ENCODE measurements at regions of chr6 and their contacts with region 1.

Region 1: DNA sequence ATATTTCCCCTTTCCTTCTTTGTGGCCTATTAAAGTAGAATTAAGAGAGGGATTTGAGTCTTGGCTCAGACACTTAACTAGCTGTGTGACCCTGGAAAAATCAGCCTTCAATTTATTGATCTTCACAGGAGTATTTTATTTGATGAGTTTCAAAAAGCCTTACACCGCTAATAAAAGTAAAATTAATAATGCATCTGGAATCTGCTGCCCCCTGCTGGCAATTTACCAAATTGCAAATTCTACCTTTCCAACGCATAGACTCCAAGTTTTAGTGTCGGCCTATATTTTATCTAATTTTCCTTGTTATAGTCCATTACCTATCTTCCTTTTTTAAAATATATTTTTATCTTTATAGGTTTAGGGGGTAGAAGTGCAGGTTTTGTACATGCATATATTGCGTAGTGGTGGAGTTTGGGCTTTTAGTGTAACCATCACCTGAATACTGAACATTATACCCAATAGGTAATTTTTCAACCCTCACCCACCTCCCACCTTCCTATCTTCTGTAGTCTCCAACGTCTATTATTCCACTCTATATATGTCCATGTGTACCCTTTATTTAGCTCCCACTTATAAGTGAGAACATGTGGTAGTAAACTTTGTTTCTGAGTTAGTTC is 46.3 kb downstream of the GOPC start:
- DNase-seq: no peak
- ATAC-seq: peak; percentile 68
- H3K4me3 ChIP-seq: no peak overlapping the region
- H3K27ac ChIP-seq: no peak overlapping the region
- H3K4me1 ChIP-seq: no peaks in the 10 kb centered on the region
- H3K27me3 ChIP-seq: no peaks in the 10 kb centered on the region
- CTCF ChIP-seq: peak; percentile 57 to 71 (median 63)
- EP300 ChIP-seq: no peak
- POLR2A ChIP-seq: no peak
- RAD21 ChIP-seq: peak; percentile 78

Region 2: GRCh38 chr6:117078624-117079023 is 477.4 kb before region 1 on chr6:
- CTCF ChIA-PET with region 1: no interaction called
- POLR2A ChIA-PET with region 1: no interaction called
- RAD21 ChIA-PET with region 1: no interaction called
- SMC1A ChIA-PET with region 1: no interaction called
- in situ Hi-C with region 1: no loop called
- intact Hi-C with region 1: no loop called
- DNase-seq: no peak
- ATAC-seq: no peak
- H3K4me3 ChIP-seq: no peak overlapping the region
- H3K27ac ChIP-seq: no peak overlapping the region
- H3K4me1 ChIP-seq: no peaks in the 10 kb centered on the region
- H3K27me3 ChIP-seq: no peaks in the 10 kb centered on the region
- CTCF ChIP-seq: no peak
- EP300 ChIP-seq: no peak
- POLR2A ChIP-seq: no peak
- RAD21 ChIP-seq: no peak

Region 3: DNA sequence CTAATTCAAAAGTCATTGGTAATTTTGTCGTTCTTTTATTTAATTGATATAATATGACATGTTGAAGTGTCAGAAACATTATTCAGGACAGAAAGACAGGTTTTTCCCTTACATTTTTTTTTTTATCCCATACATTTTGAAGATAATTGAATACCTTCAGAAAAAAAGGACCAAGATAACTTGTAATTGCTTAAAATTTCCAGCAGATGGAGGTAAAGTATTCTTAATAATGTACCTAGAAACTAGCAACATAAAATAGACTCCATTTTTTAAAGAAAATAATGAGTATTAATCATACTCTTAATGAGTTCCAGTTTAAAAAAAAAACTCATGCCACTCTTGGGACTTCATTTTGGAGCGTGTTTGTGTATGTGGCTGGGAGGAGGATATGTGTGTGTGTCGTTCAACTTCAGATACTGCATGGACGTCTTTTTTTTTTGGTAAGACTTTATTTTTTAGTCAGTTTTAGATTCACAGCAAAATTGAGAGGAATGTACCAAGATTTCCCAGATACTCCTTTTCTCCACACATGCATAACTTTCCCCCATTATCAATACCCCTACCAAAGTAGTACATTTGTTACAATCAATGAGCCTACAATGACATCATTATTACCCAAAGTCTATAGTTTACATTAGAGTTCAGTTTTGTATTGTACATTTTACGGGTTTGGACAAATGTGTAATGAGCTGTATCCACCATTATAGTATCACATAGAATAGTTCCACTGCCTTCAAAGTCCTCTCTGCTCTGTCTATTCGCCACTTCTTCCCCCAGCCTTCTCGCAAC is 209.7 kb before region 1 on chr6:
- CTCF ChIA-PET with region 1: interaction called, 3 read pairs
- POLR2A ChIA-PET with region 1: no interaction called
- RAD21 ChIA-PET with region 1: no interaction called
- SMC1A ChIA-PET with region 1: interaction called, 3 read pairs
- in situ Hi-C with region 1: loop called (anchors 10 kb)
- intact Hi-C with region 1: loop called (anchors 5 kb)
- DNase-seq: no peak
- ATAC-seq: peak; percentile 63
- H3K4me3 ChIP-seq: no peak overlapping the region
- H3K27ac ChIP-seq: no peak overlapping the region
- H3K4me1 ChIP-seq: no peaks in the 10 kb centered on the region
- H3K27me3 ChIP-seq: no peaks in the 10 kb centered on the region; a peak in 1 of 4 replicates
- CTCF ChIP-seq: peak in 2 of 3 experiments; percentile 29 to 35; a peak in 3 of 6 replicates
- EP300 ChIP-seq: no peak
- POLR2A ChIP-seq: no peak
- RAD21 ChIP-seq: 0 out of 2 replicates have a peak, but pooled peaks have one; percentile 14

Region 4: DNA sequence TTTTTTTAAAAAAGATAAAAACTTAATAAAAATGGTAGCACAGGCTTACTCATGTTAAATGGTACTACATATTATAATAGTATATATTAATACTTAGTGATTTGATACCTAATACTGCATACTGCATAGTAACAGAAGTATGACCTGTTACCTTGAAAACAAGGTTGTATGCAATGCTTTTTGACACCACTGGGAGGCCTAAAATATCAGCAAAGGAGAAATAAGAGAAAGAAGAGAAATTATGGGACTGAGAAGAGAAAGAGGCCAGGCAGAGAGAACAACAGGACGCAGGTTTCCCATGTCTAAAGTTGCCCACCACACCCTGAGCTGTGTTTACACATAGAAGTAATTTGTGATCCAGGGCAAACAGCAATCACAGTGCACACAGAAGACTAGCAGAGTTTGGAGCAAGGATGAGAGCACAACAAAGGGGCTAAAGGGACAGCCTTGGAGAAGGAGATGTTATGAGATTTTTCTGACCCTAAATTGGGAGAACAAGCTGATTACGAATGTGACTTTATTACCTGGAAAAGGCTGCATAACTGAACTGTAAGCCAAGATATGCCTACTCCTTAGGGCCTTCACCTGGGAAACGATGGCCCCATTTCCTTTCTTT is 203.4 kb before region 1 on chr6:
- CTCF ChIA-PET with region 1: no interaction called
- POLR2A ChIA-PET with region 1: no interaction called
- RAD21 ChIA-PET with region 1: no interaction called
- SMC1A ChIA-PET with region 1: no interaction called
- in situ Hi-C with region 1: loop called (anchors 10 kb)
- intact Hi-C with region 1: loop called (anchors 5 kb)
- DNase-seq: no peak
- ATAC-seq: peak; percentile 70
- H3K4me3 ChIP-seq: no peak overlapping the region
- H3K27ac ChIP-seq: no peak overlapping the region
- H3K4me1 ChIP-seq: no peaks in the 10 kb centered on the region
- H3K27me3 ChIP-seq: no peaks in the 10 kb centered on the region
- CTCF ChIP-seq: peak; percentile 32 to 49 (median 36); a peak in 4 of 6 replicates
- EP300 ChIP-seq: no peak
- POLR2A ChIP-seq: no peak
- RAD21 ChIP-seq: peak; percentile 41; the same call in 1 of the 2 replicates

Region 5: DNA sequence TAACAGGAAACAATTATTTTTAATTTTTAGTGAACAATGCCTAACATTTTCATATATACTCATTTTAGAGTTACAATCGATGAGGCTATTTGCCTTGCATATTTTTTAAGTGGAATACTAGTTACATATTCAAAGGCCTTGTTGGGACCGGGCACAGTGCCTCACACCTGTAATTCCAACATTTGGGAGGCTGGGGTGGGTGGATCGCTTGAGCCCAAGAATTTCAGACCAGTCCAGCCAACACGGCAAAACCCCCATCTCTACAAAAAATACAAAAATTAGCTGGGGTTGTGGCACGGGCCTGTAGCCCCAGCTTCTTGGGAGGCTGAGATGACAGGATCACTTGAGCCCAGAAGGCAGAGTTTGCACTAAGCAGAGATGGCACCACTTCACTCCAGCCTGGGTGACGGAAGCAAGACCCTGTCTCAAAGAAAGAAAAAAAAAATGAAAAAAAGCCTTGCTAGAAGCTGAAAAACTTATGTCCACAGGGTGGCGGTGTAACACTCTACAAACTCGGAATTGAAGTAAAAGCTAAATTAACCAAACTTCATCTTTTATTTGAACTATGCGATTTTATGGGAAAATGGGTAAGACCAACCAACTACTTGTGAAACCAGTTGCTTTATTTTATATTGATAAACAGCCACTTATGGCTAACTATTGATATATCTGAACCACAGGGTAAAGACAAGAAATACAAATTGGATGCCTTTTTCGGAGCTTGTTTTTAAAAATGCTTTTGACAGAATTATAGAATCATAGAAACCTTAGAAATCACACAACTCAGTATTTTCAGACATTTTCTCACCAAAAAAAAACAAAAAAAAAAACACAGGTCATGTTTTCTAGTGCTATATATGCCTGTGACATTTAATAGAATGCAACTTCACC is 106.2 kb before region 1 on chr6:
- CTCF ChIA-PET with region 1: interaction called, 119 read pairs
- POLR2A ChIA-PET with region 1: no interaction called
- RAD21 ChIA-PET with region 1: interaction called, 47 read pairs
- SMC1A ChIA-PET with region 1: interaction called, 51 read pairs
- in situ Hi-C with region 1: loop called (anchors 5 kb)
- intact Hi-C with region 1: loop called (anchors 1 kb)
- DNase-seq: peak; percentile 12
- ATAC-seq: peak; percentile 62
- H3K4me3 ChIP-seq: no peak overlapping the region
- H3K27ac ChIP-seq: no peak overlapping the region
- H3K4me1 ChIP-seq: no peaks in the 10 kb centered on the region
- H3K27me3 ChIP-seq: no peaks in the 10 kb centered on the region
- CTCF ChIP-seq: peak; percentile 59 to 68 (median 59); a peak in 5 of 6 replicates
- EP300 ChIP-seq: no peak
- POLR2A ChIP-seq: no peak
- RAD21 ChIP-seq: peak; percentile 86

Region 6: DNA sequence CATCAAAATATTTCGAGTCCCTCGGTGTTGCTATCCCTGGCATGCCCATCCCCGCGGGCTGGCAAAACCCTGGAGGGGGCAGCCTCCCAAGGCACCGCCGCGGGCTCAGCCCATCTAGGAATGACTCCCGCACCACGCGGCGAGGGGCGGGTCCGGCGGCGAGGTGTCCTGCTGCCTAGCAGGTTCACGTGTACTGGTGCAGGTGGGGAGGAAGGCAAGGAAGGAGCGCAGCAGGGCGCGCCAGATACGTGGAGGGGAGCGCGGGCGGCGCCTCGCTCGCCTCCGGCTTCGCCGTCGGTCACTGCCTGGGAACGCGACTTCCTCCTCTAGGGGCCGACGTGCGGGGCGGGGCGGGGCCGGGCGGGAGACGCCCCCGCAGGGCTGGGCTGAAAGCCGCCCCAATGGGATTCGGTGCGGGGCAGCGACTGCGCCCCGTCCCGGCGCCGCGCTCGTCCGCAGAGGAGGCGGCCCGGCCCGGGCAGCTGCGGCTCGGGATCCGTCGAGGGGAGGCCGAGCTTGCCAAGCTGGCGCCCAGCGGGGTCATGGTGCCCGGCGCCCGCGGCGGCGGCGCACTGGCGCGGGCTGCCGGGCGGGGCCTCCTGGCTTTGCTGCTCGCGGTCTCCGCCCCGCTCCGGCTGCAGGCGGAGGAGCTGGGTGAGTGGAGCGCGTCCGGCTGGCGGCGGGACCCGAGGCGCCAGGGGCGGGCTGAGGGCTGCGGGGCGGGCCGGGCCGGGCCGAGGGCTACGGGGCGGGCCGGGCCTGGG is 73.6 kb before region 1 on chr6 and contains the start of gene DCBLD1:
- CTCF ChIA-PET with region 1: interaction called, 223 read pairs
- POLR2A ChIA-PET with region 1: interaction called, 4 read pairs
- RAD21 ChIA-PET with region 1: interaction called, 19 read pairs
- SMC1A ChIA-PET with region 1: interaction called, 52 read pairs
- in situ Hi-C with region 1: no loop called
- intact Hi-C with region 1: loop called (anchors 1 kb)
- DNase-seq: no peak
- ATAC-seq: peak; percentile 86
- H3K4me3 ChIP-seq: peak within 1 kb of the TSS; percentile 81
- H3K27ac ChIP-seq: peak within 1 kb of the TSS; percentile 66
- H3K4me1 ChIP-seq: peaks cover 19% of the 10 kb centered on the region
- H3K27me3 ChIP-seq: no peaks in the 10 kb centered on the region
- CTCF ChIP-seq: 0 out of 6 replicates have a peak, but pooled peaks of 1 of the 3 experiments have one; percentile 3
- EP300 ChIP-seq: no peak
- POLR2A ChIP-seq: peak; percentile 69
- RAD21 ChIP-seq: no peak
- polyA plus RNA-seq, gene DCBLD1: 0.92 to 2.6 TPM

Region 7: GRCh38 chr6:117568831-117569410 is 12.9 kb after region 1 on chr6:
- CTCF ChIA-PET with region 1: interaction called, 10 read pairs
- POLR2A ChIA-PET with region 1: no interaction called
- RAD21 ChIA-PET with region 1: no interaction called
- SMC1A ChIA-PET with region 1: interaction called, 4 read pairs
- in situ Hi-C with region 1: no loop called
- intact Hi-C with region 1: no loop called
- DNase-seq: no peak
- ATAC-seq: no peak
- H3K4me3 ChIP-seq: no peak overlapping the region
- H3K27ac ChIP-seq: no peak overlapping the region
- H3K4me1 ChIP-seq: no peaks in the 10 kb centered on the region
- H3K27me3 ChIP-seq: no peaks in the 10 kb centered on the region
- CTCF ChIP-seq: no peak
- EP300 ChIP-seq: no peak
- POLR2A ChIP-seq: no peak
- RAD21 ChIP-seq: no peak

Region 8: DNA sequence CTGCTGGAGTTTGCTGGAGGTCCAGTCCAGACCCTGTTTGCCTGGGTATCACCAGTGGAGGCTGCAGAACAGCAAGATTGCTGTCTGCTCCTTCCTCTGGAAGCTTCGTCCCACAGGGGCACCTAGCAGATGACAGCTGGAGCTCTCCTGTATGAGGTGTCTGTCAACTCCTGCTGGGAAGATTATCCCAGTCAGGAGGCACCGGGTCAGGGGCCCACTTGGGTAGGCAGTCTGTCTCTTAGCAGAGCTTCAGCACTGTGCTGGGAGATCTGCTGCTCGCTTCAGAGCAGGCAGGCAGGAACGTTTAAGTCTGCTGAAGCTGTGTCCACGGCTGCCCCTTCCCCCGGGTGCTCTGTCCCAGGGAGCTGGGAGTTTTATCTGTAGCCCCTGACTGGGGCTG is 254.3 kb after region 1 on chr6:
- CTCF ChIA-PET with region 1: no interaction called
- POLR2A ChIA-PET with region 1: no interaction called
- RAD21 ChIA-PET with region 1: no interaction called
- SMC1A ChIA-PET with region 1: no interaction called
- in situ Hi-C with region 1: no loop called
- intact Hi-C with region 1: no loop called
- DNase-seq: no peak
- ATAC-seq: no peak
- H3K4me3 ChIP-seq: no peak overlapping the region
- H3K27ac ChIP-seq: no peak overlapping the region
- H3K4me1 ChIP-seq: no peaks in the 10 kb centered on the region
- H3K27me3 ChIP-seq: no peaks in the 10 kb centered on the region
- CTCF ChIP-seq: no peak
- EP300 ChIP-seq: no peak
- POLR2A ChIP-seq: no peak
- RAD21 ChIP-seq: no peak

Region 9: GRCh38 chr6:117829594-117830319 is 273.8 kb after region 1 on chr6:
- CTCF ChIA-PET with region 1: interaction called, 5 read pairs
- POLR2A ChIA-PET with region 1: no interaction called
- RAD21 ChIA-PET with region 1: no interaction called
- SMC1A ChIA-PET with region 1: interaction called, 3 read pairs
- in situ Hi-C with region 1: no loop called
- intact Hi-C with region 1: loop called (anchors 10 kb)
- DNase-seq: no peak
- ATAC-seq: peak; percentile 57
- H3K4me3 ChIP-seq: no peak overlapping the region
- H3K27ac ChIP-seq: no peak overlapping the region
- H3K4me1 ChIP-seq: no peaks in the 10 kb centered on the region
- H3K27me3 ChIP-seq: no peaks in the 10 kb centered on the region
- CTCF ChIP-seq: peak; percentile 43 to 56 (median 45); a peak in 5 of 6 replicates
- EP300 ChIP-seq: no peak
- POLR2A ChIP-seq: no peak
- RAD21 ChIP-seq: peak; percentile 72